ENCODE measurements at regions of chr3 and their contacts with region 1.

Region 1: GRCh38 chr3:28726840-28727239 is 378.2 kb upstream of the AZI2 start:
- DNase-seq: peak; percentile 66
- ATAC-seq: peak; percentile 87
- H3K4me3 ChIP-seq: no peak overlapping the region
- H3K27ac ChIP-seq: no peak overlapping the region
- H3K4me1 ChIP-seq: no peaks in the 10 kb centered on the region
- H3K27me3 ChIP-seq: peaks cover 4% of the 10 kb centered on the region; the same call in 1 of the 2 replicates
- CTCF ChIP-seq: peak; percentile 85

Region 2: DNA sequence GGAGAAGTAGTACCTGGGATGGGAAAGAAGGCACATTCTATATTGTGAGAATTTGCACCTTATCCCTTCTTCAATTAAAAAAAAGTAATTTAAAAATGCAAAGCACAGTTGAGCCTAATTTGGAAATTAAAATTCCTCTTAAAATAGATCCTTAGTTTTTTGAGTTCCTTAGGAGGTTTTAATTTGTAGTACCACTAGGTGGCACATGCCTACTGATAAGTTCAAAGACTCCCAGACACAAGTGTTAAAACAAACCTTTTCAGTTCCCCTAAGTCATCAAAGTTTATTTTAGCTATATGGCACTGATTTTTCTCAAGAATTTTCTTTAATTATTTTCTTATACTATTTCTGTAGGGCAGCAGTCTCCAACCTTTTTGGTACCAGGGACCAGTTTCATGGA is 250.6 kb before region 1 on chr3:
- CTCF ChIA-PET with region 1: interaction called, 3 read pairs
- POLR2A ChIA-PET with region 1: no interaction called
- intact Hi-C with region 1: loop called (anchors 1 kb)
- DNase-seq: peak; percentile 64
- ATAC-seq: peak; percentile 59
- H3K4me3 ChIP-seq: no peak overlapping the region
- H3K27ac ChIP-seq: no peak overlapping the region
- H3K4me1 ChIP-seq: no peaks in the 10 kb centered on the region
- H3K27me3 ChIP-seq: no peaks in the 10 kb centered on the region
- CTCF ChIP-seq: peak; percentile 75

Region 3: DNA sequence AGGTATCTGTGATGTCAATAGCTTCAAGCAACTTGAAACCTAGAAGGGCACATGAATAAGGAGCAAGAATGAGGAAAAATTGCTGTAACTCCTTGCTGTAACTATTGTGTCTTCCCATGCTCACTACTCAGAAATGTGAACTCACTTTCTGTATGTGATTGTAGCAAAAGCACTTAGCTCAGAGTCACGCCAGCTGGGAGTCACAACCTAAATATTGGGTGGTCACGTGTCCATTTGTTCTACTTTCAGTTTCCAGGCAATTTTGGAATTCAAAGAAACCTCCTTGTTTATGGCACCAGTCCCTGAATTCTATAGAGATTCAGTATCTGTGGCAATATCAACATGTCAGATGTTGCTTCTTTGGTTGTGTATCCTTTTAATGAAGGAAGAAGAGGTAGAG is 136.6 kb before region 1 on chr3:
- CTCF ChIA-PET with region 1: no interaction called
- POLR2A ChIA-PET with region 1: no interaction called
- intact Hi-C with region 1: loop called (anchors 10 kb)
- DNase-seq: no peak
- ATAC-seq: no peak
- H3K4me3 ChIP-seq: no peak overlapping the region
- H3K27ac ChIP-seq: no peak overlapping the region
- H3K4me1 ChIP-seq: no peaks in the 10 kb centered on the region
- H3K27me3 ChIP-seq: peaks cover 31% of the 10 kb centered on the region; the same call in 1 of the 2 replicates
- CTCF ChIP-seq: no peak

Region 4: DNA sequence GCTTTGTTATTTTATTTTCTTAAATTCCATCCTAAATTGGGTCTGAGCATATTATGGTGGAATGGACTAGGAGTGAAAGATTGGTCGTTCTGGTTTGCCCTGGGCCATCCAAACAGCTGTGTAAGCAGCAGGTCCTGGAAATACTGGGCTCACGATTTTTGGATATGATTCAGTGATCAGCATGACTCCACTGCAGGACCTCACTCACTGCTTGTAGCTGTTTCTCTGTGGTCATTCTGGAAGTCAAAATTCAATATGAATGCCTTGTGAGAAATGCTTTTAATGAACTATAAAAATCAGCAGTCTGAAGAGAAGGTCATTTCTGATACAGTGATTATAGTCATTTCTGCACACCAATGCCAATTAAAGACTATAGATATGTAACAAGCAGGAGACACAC is 739.0 kb after region 1 on chr3:
- CTCF ChIA-PET with region 1: no interaction called
- POLR2A ChIA-PET with region 1: no interaction called
- intact Hi-C with region 1: no loop called
- DNase-seq: no peak
- ATAC-seq: no peak
- H3K4me3 ChIP-seq: no peak overlapping the region
- H3K27ac ChIP-seq: no peak overlapping the region
- H3K4me1 ChIP-seq: peaks cover 8% of the 10 kb centered on the region; the same call in 1 of the 2 replicates
- H3K27me3 ChIP-seq: no peaks in the 10 kb centered on the region
- CTCF ChIP-seq: no peak